ENCODE measurements at regions of chr13 and their contacts with region 1.

Region 1: GRCh38 chr13:111066544-111066943 is 48.6 kb upstream of the ARHGEF7 start:
- DNase-seq: no peak
- ATAC-seq: no peak
- H3K4me3 Mint-ChIP-seq: peak overlapping the region; percentile 62
- H3K27ac Mint-ChIP-seq: no peak overlapping the region
- H3K4me1 Mint-ChIP-seq: peaks cover 3% of the 10 kb centered on the region
- H3K27me3 Mint-ChIP-seq: peaks cover 36% of the 10 kb centered on the region
- CTCF ChIP-seq: no peak

Region 2: DNA sequence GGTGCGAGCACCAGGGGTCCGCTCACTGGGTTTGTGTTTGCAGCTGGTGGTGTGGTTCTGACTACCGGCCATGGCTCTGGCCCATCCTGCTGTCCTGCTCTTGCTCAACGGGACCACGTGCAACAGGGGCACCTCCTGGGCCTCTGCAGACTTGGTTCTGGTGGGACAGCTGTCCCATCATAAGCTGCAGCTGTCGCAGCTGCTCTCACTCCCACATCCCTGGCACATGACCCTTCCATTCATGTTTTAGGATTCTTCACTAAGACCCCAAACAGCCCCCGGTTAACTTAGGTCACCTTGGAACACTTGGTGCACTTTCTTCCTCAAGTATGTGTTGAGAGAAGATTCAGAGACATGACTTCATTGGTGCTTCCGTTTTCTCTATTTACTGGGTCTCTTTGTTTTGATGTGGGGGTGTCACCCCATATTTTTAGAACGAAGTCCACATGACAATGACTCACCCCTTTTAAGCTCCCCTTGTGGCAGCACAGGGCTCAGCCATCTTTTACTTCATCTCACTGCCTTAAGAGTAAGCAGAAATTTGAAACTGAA is 19.9 kb before region 1 on chr13:
- CTCF ChIA-PET with region 1: interaction called, 13 read pairs
- POLR2A ChIA-PET with region 1: no interaction called
- intact Hi-C with region 1: no loop called
- DNase-seq: no peak
- ATAC-seq: peak; percentile 65
- H3K4me3 Mint-ChIP-seq: no peak overlapping the region
- H3K27ac Mint-ChIP-seq: no peak overlapping the region
- H3K4me1 Mint-ChIP-seq: peaks cover 5% of the 10 kb centered on the region
- H3K27me3 Mint-ChIP-seq: peaks cover 4% of the 10 kb centered on the region
- CTCF ChIP-seq: no peak

Region 3: GRCh38 chr13:111095031-111095840 is 28.7 kb after region 1 on chr13:
- CTCF ChIA-PET with region 1: interaction called, 17 read pairs
- POLR2A ChIA-PET with region 1: no interaction called
- intact Hi-C with region 1: no loop called
- DNase-seq: no peak
- ATAC-seq: no peak
- H3K4me3 Mint-ChIP-seq: no peak overlapping the region
- H3K27ac Mint-ChIP-seq: no peak overlapping the region
- H3K4me1 Mint-ChIP-seq: no peaks in the 10 kb centered on the region
- H3K27me3 Mint-ChIP-seq: peaks cover 24% of the 10 kb centered on the region
- CTCF ChIP-seq: no peak

Region 4: GRCh38 chr13:111210544-111211469 is 144.3 kb after region 1 on chr13:
- CTCF ChIA-PET with region 1: interaction called, 45 read pairs
- POLR2A ChIA-PET with region 1: no interaction called
- intact Hi-C with region 1: loop called (anchors 10 kb)
- DNase-seq: no peak
- ATAC-seq: no peak
- H3K4me3 Mint-ChIP-seq: no peak overlapping the region
- H3K27ac Mint-ChIP-seq: no peak overlapping the region
- H3K4me1 Mint-ChIP-seq: peaks cover 36% of the 10 kb centered on the region
- H3K27me3 Mint-ChIP-seq: no peaks in the 10 kb centered on the region
- CTCF ChIP-seq: no peak

Region 5: GRCh38 chr13:111225810-111226546 is 159.4 kb after region 1 on chr13:
- CTCF ChIA-PET with region 1: interaction called, 48 read pairs
- POLR2A ChIA-PET with region 1: no interaction called
- intact Hi-C with region 1: no loop called
- DNase-seq: no peak
- ATAC-seq: peak; percentile 55
- H3K4me3 Mint-ChIP-seq: no peak overlapping the region
- H3K27ac Mint-ChIP-seq: peak overlapping the region; percentile 1
- H3K4me1 Mint-ChIP-seq: peaks cover 32% of the 10 kb centered on the region
- H3K27me3 Mint-ChIP-seq: no peaks in the 10 kb centered on the region
- CTCF ChIP-seq: no peak